Head of caudate nucleus (tissue), 42 donors: ENCODE measurements at regions of chr3 and their contacts with region 1.

Region 1: DNA sequence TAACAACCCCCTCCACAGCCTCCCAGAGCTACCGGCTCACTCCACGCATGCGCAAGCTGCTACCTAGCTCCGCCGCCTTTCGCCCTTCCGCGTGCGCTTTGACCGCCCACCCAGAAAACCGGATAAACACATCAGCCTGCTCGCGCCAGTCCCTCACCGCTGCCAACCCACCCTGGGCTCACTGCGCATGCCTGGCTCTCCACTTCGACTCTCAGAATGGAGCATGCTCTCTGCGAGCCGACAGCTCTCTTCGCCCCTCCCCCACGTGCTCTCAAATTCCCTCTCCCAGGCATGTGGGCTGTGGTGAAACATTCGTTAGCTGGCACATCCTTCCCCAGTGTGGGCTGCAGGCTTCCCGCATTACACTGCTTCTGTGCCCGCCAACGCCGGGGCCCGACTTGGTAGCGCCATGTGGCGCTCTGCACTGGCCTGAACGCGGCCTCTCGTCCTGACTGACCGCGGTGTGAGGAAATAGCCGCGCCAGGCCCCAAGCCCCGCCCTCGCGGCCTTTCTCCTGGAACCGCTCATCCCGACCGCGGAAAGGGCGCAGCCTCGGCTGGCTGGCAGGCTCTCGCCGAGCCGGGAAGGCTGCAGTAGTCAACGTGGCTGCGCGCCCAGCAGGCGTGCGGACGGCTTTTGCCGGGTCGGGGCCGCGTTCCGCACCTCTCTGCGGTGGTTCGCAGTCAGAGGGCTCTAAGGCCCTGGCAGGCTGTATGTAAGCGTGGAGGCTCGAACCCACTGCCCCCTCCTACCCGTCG is 445 bp upstream of the MSL2 start:
- DNase-seq: peak; percentile 93 to 99 (median 97)

Region 2: GRCh38 chr3:136250226-136250902 is 53.8 kb after region 1 on chr3 and contains the start of gene PCCB:
- intact Hi-C with region 1: loop called (anchors 1 kb)
- DNase-seq: peak; percentile 82 to 96 (median 92)